ENCODE measurements at regions of chr3 and their contacts with region 1.

Region 1: DNA sequence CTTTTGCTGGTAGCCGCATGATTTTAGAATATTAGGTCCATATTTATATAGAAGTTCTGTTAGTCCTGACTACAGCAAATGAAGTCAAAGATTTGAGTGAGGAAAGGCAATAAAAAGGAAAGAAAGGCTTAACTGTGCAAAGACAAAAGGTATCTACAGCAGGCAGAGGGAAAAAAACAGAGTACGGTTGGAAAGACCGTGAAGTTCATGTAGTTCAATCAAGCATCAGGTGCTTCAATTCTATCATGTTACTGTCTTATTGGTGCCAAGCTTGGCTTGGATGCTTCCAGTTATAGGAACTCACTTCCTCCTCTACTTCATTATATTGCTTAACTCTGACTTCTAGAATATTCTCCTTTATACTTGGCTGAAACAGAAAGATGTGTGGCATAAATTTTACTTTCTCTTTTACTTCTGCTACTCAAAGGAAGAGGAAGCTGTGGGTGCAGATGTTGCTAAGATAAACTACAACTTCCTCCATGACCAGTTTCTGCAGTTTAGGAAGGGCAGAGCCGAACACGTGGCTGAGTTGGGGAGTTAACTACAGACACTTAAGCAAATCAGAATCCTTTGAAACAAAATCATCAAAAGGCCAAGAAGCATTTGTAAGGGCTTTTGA is 72.6 kb upstream of the ZBED2 start:
- DNase-seq: peak; percentile 41
- H3K4me3 ChIP-seq: no peak overlapping the region
- H3K27ac ChIP-seq: peak overlapping the region in 3 of 4 donors; percentile 3 to 50 (median 43)
- H3K4me1 ChIP-seq: peaks cover 0 to 19% (median 0%) of the 10 kb centered on the region in 4 donors
- H3K27me3 ChIP-seq: no peaks in the 10 kb centered on the region
- CTCF ChIP-seq: no peak
- EP300 ChIP-seq: no peak
- POLR2A ChIP-seq: no peak

Region 2: GRCh38 chr3:112013784-112014143 is 346.0 kb after region 1 on chr3:
- in situ Hi-C with region 1: no loop called
- intact Hi-C with region 1: loop called (anchors 1 kb)
- DNase-seq: no peak
- H3K4me3 ChIP-seq: no peak overlapping the region
- H3K27ac ChIP-seq: no peak overlapping the region
- H3K4me1 ChIP-seq: peaks cover 0 to 9% (median 0%) of the 10 kb centered on the region in 4 donors
- H3K27me3 ChIP-seq: no peaks in the 10 kb centered on the region
- CTCF ChIP-seq: no peak
- EP300 ChIP-seq: no peak
- POLR2A ChIP-seq: no peak